ENCODE measurements at regions of chr5 and their contacts with region 1.

Region 1: GRCh38 chr5:41869739-41870626 is at the start of gene OXCT1:
- DNase-seq: peak; percentile 77 to 92 (median 80)
- ATAC-seq: peak; percentile 89
- H3K4me3 ChIP-seq: peak within 1 kb of the TSS; percentile 57
- H3K27ac ChIP-seq: peak within 1 kb of the TSS; percentile 79
- H3K4me1 ChIP-seq: peaks cover 14 to 16% of the 10 kb centered on the region in 2 experiments; a peak in 4 of 5 replicates
- H3K27me3 ChIP-seq: no peaks in the 10 kb centered on the region
- CTCF ChIP-seq: 0 out of 6 replicates have a peak, but pooled peaks of 1 of the 3 experiments have one; percentile 2
- EP300 ChIP-seq: no peak
- POLR2A ChIP-seq: peak; percentile 90
- RAD21 ChIP-seq: no peak
- polyA plus RNA-seq, gene OXCT1: 24.7 to 41.9 TPM

Region 2: DNA sequence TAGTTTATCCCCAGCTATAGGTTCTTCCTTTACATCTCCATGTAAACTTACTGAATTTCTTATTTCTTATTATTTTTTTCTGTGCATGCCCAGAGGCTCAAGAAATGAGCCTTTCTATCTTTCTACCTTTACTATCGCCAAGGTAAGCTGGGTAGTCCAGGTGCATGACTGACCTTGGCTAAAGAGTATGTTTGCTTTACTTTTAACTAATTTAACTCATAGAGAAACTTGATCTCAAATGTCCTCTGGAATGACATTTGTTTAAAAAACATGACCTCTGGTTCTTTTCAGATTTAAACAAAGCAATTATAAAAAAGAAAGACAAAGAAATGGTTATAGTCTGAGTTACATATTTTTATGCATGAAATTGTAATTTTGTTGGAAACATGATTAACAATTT is 657.0 kb before region 1 on chr5:
- CTCF ChIA-PET with region 1: no interaction called
- POLR2A ChIA-PET with region 1: no interaction called
- in situ Hi-C with region 1: no loop called
- intact Hi-C with region 1: no loop called
- DNase-seq: no peak
- ATAC-seq: no peak
- H3K4me3 ChIP-seq: no peak overlapping the region
- H3K27ac ChIP-seq: no peak overlapping the region
- H3K4me1 ChIP-seq: no peaks in the 10 kb centered on the region
- H3K27me3 ChIP-seq: no peaks in the 10 kb centered on the region
- CTCF ChIP-seq: no peak
- EP300 ChIP-seq: no peak
- POLR2A ChIP-seq: no peak
- RAD21 ChIP-seq: no peak

Region 3: DNA sequence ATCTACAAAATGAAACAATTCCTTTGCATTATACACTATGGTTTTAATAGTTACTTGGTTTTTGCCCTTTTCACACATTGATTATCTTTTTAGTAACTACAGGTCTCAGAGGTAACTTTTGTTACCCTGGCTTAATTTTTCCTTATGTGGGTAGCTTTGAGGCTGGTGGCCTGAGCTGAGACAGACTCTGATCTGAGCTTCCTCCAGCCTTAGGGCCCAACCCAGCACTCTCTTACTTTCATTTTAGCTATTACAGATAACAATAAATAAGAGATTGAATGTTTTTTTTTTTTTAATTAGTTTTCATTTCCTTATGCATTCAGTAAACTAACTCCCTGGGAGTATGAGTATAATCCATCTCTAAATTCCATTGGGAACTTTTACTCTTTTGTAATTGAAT is 15.3 kb after region 1 on chr5:
- CTCF ChIA-PET with region 1: no interaction called
- POLR2A ChIA-PET with region 1: interaction called, 25 read pairs
- in situ Hi-C with region 1: no loop called
- intact Hi-C with region 1: no loop called
- DNase-seq: no peak
- ATAC-seq: peak; percentile 15; the same call in 1 of the 3 replicates
- H3K4me3 ChIP-seq: no peak overlapping the region
- H3K27ac ChIP-seq: no peak overlapping the region
- H3K4me1 ChIP-seq: peaks cover 4 to 21% of the 10 kb centered on the region in 2 experiments; a peak in 3 of 5 replicates
- H3K27me3 ChIP-seq: no peaks in the 10 kb centered on the region
- CTCF ChIP-seq: no peak
- EP300 ChIP-seq: no peak
- POLR2A ChIP-seq: no peak
- RAD21 ChIP-seq: no peak

Region 4: GRCh38 chr5:41903892-41904799 is 34.2 kb after region 1 on chr5 and contains the start of gene RIMOC1:
- CTCF ChIA-PET with region 1: no interaction called
- POLR2A ChIA-PET with region 1: interaction called, 8 read pairs
- in situ Hi-C with region 1: no loop called
- intact Hi-C with region 1: loop called (anchors 1 kb)
- DNase-seq: peak; percentile 98 to 100 (median 99)
- ATAC-seq: peak; percentile 99
- H3K4me3 ChIP-seq: peak within 1 kb of the TSS; percentile 67
- H3K27ac ChIP-seq: peak within 1 kb of the TSS; percentile 86
- H3K4me1 ChIP-seq: peaks cover 6 to 18% of the 10 kb centered on the region in 2 experiments
- H3K27me3 ChIP-seq: no peaks in the 10 kb centered on the region
- CTCF ChIP-seq: no peak
- EP300 ChIP-seq: peak; percentile 40; the same call in 1 of the 2 replicates
- POLR2A ChIP-seq: peak; percentile 98
- RAD21 ChIP-seq: peak; percentile 11 to 19; a peak in 1 of 4 replicates
- polyA plus RNA-seq, gene RIMOC1: 11.6 to 14.3 TPM

Region 5: DNA sequence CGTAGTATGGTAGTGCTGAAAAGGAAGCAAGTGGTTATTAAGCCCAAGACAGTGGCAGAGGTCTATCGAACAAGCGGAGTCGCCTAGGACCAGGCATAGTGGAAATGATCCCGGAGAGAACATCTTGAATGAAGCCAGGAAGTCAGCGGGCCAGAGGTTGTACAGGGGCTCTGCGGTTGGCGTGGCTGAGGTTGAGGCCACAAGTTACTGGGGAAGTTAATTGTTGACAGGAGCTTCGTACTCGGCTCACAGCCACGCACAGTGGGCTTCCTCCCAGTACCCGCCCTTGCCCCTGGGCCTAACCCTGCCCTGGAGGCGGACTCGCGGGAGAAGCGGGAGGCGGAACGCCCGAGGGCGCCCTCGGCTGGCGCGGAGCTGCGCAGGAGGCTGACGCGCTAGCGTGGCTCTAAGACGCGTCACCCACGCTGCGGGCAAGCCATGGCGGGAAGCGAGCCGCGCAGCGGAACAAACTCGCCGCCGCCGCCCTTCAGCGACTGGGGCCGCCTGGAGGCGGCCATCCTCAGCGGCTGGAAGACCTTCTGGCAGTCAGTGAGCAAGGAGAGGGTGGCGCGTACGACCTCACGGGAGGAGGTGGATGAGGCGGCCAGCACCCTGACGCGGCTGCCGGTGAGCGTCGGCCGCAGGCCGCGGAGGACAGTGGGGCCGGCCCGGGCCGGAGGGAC is 55.0 kb after region 1 on chr5 and contains the start of gene FBXO4:
- CTCF ChIA-PET with region 1: no interaction called
- POLR2A ChIA-PET with region 1: interaction called, 7 read pairs
- in situ Hi-C with region 1: no loop called
- intact Hi-C with region 1: loop called (anchors 2 kb)
- DNase-seq: peak; percentile 80 to 95 (median 86)
- ATAC-seq: peak; percentile 97
- H3K4me3 ChIP-seq: peak within 1 kb of the TSS; percentile 66
- H3K27ac ChIP-seq: peak within 1 kb of the TSS; percentile 91
- H3K4me1 ChIP-seq: peaks cover 9 to 13% of the 10 kb centered on the region in 2 experiments; a peak in 3 of 5 replicates
- H3K27me3 ChIP-seq: no peaks in the 10 kb centered on the region
- CTCF ChIP-seq: peak; percentile 72 to 75 (median 73)
- EP300 ChIP-seq: no peak
- POLR2A ChIP-seq: peak; percentile 94
- RAD21 ChIP-seq: peak; percentile 59 to 61; a peak in 3 of 4 replicates
- polyA plus RNA-seq, gene FBXO4: 5.9 to 8.2 TPM

Region 6: GRCh38 chr5:42583322-42583721 is 713.3 kb after region 1 on chr5:
- CTCF ChIA-PET with region 1: no interaction called
- POLR2A ChIA-PET with region 1: no interaction called
- in situ Hi-C with region 1: loop called (anchors 25 kb)
- intact Hi-C with region 1: no loop called
- DNase-seq: peak; percentile 69 to 88 (median 75)
- ATAC-seq: peak; percentile 77
- H3K4me3 ChIP-seq: no peak overlapping the region
- H3K27ac ChIP-seq: no peak overlapping the region
- H3K4me1 ChIP-seq: peaks cover 16 to 32% of the 10 kb centered on the region in 2 experiments
- H3K27me3 ChIP-seq: peaks cover 0 to 7% of the 10 kb centered on the region in 2 experiments; a peak in 3 of 5 replicates
- CTCF ChIP-seq: peak; percentile 83 to 94 (median 93)
- EP300 ChIP-seq: peak; percentile 48; the same call in 1 of the 2 replicates
- POLR2A ChIP-seq: no peak
- RAD21 ChIP-seq: peak; percentile 69 to 81

Region 7: DNA sequence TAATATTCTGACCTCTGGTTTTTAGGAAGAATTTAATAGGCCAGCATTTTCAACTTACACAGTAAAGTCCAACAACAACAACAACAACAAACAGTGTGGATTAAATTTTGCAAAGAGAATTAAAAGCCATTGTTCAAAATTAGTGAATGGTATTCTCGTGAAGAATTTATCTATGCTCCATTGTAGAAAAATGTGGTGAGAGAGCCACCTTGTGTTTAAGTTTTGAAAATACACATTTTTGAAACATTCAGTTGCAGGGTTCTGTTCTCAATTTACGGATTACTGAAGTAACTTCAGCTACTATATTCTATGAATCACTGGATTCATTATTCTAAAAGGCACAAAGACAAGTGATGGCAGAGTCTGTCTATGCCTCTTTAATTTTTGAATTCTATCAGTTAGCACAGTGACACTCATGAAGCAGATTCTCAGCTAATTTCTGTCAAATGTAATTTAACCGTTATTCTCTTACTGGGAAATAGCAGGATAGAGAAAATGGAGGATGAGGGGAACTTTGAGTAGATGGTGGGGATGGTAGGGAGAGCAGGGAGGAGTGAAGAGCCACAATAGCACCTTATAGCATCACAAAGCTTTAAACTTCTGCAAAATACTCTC is 897.6 kb after region 1 on chr5:
- CTCF ChIA-PET with region 1: no interaction called
- POLR2A ChIA-PET with region 1: no interaction called
- in situ Hi-C with region 1: loop called (anchors 25 kb)
- intact Hi-C with region 1: no loop called
- DNase-seq: peak in 3 of 4 experiments; percentile 13 to 51 (median 26)
- ATAC-seq: peak; percentile 81
- H3K4me3 ChIP-seq: no peak overlapping the region
- H3K27ac ChIP-seq: no peak overlapping the region
- H3K4me1 ChIP-seq: no peaks in the 10 kb centered on the region
- H3K27me3 ChIP-seq: no peaks in the 10 kb centered on the region
- CTCF ChIP-seq: peak; percentile 40 to 79 (median 46); a peak in 3 of 6 replicates
- EP300 ChIP-seq: no peak
- POLR2A ChIP-seq: no peak
- RAD21 ChIP-seq: peak; percentile 90 to 91

Region 8: GRCh38 chr5:42870882-42871418 is 1001.0 kb after region 1 on chr5:
- CTCF ChIA-PET with region 1: no interaction called
- POLR2A ChIA-PET with region 1: no interaction called
- in situ Hi-C with region 1: loop called (anchors 10 kb)
- intact Hi-C with region 1: no loop called
- DNase-seq: peak in 1 of 4 experiments; percentile 48
- ATAC-seq: peak; percentile 41
- H3K4me3 ChIP-seq: no peak overlapping the region
- H3K27ac ChIP-seq: no peak overlapping the region
- H3K4me1 ChIP-seq: peaks cover 16 to 32% of the 10 kb centered on the region in 2 experiments; a peak in 4 of 5 replicates
- H3K27me3 ChIP-seq: no peaks in the 10 kb centered on the region
- CTCF ChIP-seq: peak; percentile 21 to 26 (median 22); a peak in 2 of 6 replicates
- EP300 ChIP-seq: no peak
- POLR2A ChIP-seq: no peak
- RAD21 ChIP-seq: peak in 1 of 2 experiments; percentile 48; a peak in 2 of 4 replicates